PC-9 (cell line): ENCODE measurements at regions of chr19 and their contacts with region 1.

Region 1: DNA sequence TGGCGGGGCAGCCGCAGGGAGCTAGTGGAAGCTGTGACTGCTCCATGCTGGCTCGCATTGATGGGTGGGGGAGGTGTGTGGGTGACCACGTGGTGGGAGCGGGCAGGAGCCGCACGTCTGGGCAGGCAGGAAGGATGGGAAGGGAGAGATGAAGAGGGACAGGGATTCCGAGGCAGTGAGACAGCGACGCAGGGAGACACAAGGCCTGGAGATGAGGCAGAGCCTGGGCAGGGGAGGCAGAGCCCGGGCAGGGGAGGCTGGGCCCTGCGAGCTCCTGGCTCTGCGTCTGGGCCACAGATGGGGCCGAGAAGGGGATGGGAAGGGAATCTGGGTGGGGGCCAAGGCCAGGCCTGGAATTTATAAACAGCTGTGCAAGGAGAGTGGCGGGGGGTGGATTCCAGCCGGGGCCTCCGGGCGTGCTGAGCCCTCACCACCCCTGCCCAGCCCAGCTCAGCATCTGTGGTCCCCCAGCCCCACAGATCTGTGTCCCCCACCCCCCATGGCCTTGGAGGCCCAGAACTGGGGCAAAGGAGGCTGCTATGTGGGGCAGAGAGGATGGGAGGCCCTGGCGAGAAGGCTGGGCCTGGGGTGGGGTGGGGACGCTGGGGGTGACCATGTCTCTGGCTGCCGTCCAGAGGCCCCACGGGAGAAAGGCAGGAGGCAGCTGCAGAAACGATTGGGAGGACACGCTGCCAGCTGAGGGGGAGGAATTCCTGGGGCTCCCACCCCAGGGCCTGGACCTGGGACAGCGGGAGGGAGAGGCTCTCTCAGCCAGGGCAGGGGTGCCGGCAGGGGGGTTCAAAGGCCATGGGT is 6.0 kb downstream of the EHD2 start:
- DNase-seq: no peak
- H3K4me3 ChIP-seq: no peak overlapping the region
- H3K27ac ChIP-seq: no peak overlapping the region
- H3K4me1 ChIP-seq: peaks cover 19% of the 10 kb centered on the region
- H3K27me3 ChIP-seq: no peaks in the 10 kb centered on the region
- CTCF ChIP-seq: no peak

Region 2: GRCh38 chr19:47124937-47125668 is 594.1 kb before region 1 on chr19:
- CTCF ChIA-PET with region 1: no interaction called
- POLR2A ChIA-PET with region 1: no interaction called
- intact Hi-C with region 1: no loop called
- DNase-seq: peak; percentile 39 to 75
- H3K4me3 ChIP-seq: no peak overlapping the region
- H3K27ac ChIP-seq: peak overlapping the region; percentile 65
- H3K4me1 ChIP-seq: peaks cover 40% of the 10 kb centered on the region
- H3K27me3 ChIP-seq: no peaks in the 10 kb centered on the region
- CTCF ChIP-seq: peak; percentile 96

Region 3: DNA sequence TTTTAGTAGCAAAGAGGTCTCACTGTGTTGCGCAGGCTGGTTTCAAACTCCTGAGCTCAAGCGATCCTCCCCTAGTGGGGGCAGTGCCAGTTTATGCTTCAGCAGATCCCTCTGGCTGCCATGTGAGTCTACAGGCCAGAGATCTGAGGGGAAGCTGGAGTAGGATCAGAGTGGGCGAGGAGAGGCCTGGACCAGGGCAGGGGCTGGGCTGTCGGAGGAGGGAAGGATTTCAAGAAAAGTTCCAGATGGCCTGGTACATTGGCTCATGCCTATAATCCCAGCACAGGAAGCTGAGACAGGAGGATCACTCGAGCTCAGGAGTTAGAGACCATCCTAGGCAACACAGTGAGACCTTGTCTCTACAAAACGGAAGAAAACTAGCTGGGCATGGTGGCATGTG is 360.3 kb before region 1 on chr19:
- CTCF ChIA-PET with region 1: interaction called, 13 read pairs
- POLR2A ChIA-PET with region 1: no interaction called
- intact Hi-C with region 1: no loop called
- DNase-seq: no peak
- H3K4me3 ChIP-seq: no peak overlapping the region
- H3K27ac ChIP-seq: no peak overlapping the region
- H3K4me1 ChIP-seq: peaks cover 12% of the 10 kb centered on the region
- H3K27me3 ChIP-seq: no peaks in the 10 kb centered on the region
- CTCF ChIP-seq: no peak

Region 4: DNA sequence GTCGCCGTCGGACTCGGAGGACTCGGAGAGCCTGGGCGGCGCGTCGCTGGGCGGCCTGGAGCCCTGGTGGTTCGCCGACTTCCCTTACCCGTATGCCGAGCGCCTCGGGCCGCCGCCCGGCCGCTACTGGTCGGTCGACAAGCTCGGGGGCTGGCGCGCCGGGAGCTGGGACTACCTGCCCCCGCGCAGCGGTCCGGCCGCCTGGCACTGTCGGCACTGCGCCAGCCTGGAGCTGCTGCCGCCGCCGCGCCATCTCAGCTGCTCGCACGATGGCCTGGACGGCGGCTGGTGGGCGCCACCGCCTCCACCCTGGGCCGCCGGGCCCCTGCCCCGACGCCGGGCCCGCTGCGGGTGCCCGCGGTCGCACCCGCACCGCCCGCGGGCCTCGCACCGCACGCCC is 724.0 kb after region 1 on chr19:
- CTCF ChIA-PET with region 1: no interaction called
- POLR2A ChIA-PET with region 1: no interaction called
- intact Hi-C with region 1: no loop called
- DNase-seq: no peak
- H3K4me3 ChIP-seq: no peak overlapping the region
- H3K27ac ChIP-seq: no peak overlapping the region
- H3K4me1 ChIP-seq: peaks cover 23% of the 10 kb centered on the region; the same call in 1 of the 2 replicates
- H3K27me3 ChIP-seq: no peaks in the 10 kb centered on the region
- CTCF ChIP-seq: no peak